ENCODE measurements at regions of chr1 and their contacts with region 1.

Region 1: DNA sequence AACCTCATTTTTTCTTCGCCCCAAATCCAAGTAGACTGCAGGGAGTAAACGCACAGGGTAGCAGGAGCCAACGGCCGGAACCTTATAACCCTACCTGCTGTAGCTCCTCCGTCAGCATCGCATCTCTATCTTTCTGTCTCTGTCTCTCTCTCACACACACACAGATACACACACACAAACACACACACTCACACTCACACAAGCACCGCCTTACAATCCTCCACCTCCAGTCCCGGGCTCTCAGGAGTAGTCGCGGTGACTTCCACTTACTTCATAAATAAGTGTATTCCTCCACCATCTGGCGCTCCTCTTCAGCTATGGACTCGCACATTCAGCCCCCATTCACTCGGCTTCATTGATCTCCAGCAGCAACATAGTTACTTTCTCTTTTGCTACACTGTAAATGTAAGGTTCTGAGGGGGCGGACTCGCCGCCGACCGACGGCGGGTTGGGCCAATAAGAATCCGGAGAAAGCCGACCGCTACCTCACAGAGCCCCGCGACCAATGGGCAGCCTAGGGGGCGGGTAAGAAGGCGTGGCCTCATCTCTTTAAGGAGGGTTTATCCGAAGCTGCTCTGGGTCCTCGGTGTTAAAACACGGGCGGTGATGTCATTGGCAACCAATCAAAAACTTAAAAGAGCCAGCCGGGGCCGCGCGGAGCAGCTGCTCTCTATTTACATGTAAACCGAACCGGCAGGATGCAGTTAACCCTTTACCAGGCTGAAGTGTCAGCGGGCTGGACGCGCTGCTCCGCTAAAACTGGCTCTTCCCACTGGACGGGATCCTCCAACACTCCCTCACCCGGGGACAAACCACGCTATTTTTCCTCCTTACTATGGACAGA is at the start of gene DUSP10:
- DNase-seq: peak; percentile 100
- ATAC-seq: peak; percentile 82
- H3K4me3 ChIP-seq: peak within 1 kb of the TSS; percentile 89
- H3K27ac ChIP-seq: peak within 1 kb of the TSS; percentile 85
- H3K4me1 ChIP-seq: peaks cover 15% of the 10 kb centered on the region
- H3K27me3 ChIP-seq: no peaks in the 10 kb centered on the region
- CTCF ChIP-seq: no peak
- total RNA-seq, gene DUSP10: 5.1 and 6.2 TPM in 2 replicates

Region 2: GRCh38 chr1:221543529-221544120 is 198.3 kb before region 1 on chr1:
- CTCF ChIA-PET with region 1: interaction called, 11 read pairs
- POLR2A ChIA-PET with region 1: no interaction called
- intact Hi-C with region 1: loop called (anchors 1 kb)
- DNase-seq: peak; percentile 60
- ATAC-seq: peak; percentile 48; the same call in 1 of the 2 replicates
- H3K4me3 ChIP-seq: no peak overlapping the region
- H3K27ac ChIP-seq: no peak overlapping the region
- H3K4me1 ChIP-seq: peaks cover 5% of the 10 kb centered on the region; the same call in 1 of the 2 replicates
- H3K27me3 ChIP-seq: no peaks in the 10 kb centered on the region
- CTCF ChIP-seq: peak; percentile 87

Region 3: DNA sequence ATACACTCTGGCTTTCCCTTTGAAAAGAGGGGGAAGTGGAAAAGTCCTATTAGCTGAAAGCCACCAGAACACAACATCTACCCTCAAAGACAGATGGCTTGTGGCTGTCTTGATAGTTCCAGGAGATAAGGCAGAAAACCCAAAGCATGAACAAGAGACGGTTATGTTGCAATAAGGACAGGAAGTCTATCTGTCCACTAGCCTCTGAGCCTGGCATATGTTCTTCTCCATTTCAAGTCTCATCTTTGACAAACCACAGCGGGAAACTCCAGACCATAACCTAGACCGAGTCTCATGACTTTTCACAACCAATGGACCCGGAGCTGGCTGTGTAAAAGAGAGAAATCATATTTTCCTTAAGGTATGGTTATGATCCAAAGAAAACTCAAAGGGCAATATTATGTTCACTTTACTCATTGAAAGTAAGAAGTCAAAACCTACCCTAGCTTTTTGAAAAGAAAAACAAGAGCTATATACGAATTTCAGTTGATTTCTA is 33.8 kb before region 1 on chr1:
- CTCF ChIA-PET with region 1: no interaction called
- POLR2A ChIA-PET with region 1: no interaction called
- intact Hi-C with region 1: no loop called
- DNase-seq: no peak
- ATAC-seq: no peak
- H3K4me3 ChIP-seq: no peak overlapping the region
- H3K27ac ChIP-seq: no peak overlapping the region
- H3K4me1 ChIP-seq: peaks cover 15% of the 10 kb centered on the region
- H3K27me3 ChIP-seq: no peaks in the 10 kb centered on the region
- CTCF ChIP-seq: no peak

Region 4: GRCh38 chr1:221718381-221719277 is 23.3 kb before region 1 on chr1:
- CTCF ChIA-PET with region 1: no interaction called
- POLR2A ChIA-PET with region 1: no interaction called
- intact Hi-C with region 1: loop called (anchors 2 kb)
- DNase-seq: peak; percentile 81
- ATAC-seq: peak; percentile 79
- H3K4me3 ChIP-seq: peak overlapping the region; percentile 14; the same call in 1 of the 2 replicates
- H3K27ac ChIP-seq: peak overlapping the region; percentile 38
- H3K4me1 ChIP-seq: peaks cover 32% of the 10 kb centered on the region
- H3K27me3 ChIP-seq: no peaks in the 10 kb centered on the region
- CTCF ChIP-seq: no peak

Region 5: DNA sequence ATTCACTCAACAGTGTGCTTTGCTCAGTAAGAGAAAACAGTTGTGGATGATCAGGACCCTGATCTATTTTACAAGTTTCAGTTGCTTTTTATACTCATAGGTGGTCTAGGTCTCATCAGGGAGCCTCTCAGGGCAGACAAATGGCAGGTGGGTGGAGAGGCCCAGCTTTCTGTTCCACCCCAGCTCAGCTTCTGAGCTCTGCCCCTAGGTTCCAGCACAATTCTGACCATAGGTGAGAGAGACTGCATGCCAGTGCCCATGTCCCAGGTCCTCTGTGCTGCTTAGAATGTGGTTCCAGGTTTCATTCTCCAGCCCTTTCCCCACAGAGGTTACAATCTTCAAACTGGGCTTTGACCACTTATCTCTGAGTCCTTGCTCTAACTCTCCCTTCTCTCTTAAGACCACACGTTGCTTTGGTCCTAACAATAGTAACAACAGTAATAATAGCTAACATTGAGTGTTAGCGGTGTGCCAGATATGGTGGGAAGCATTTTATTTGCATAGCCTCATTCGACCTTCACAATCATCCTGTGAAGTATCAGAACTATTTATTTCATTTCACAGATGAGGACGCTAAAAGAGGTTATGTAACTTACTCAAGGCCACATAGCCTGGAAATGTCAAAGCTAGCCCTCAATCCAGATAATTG is 19.5 kb after region 1 on chr1:
- CTCF ChIA-PET with region 1: no interaction called
- POLR2A ChIA-PET with region 1: no interaction called
- intact Hi-C with region 1: no loop called
- DNase-seq: no peak
- ATAC-seq: no peak
- H3K4me3 ChIP-seq: no peak overlapping the region
- H3K27ac ChIP-seq: no peak overlapping the region
- H3K4me1 ChIP-seq: no peaks in the 10 kb centered on the region
- H3K27me3 ChIP-seq: no peaks in the 10 kb centered on the region
- CTCF ChIP-seq: no peak

Region 6: GRCh38 chr1:221886743-221887413 is 144.9 kb after region 1 on chr1:
- CTCF ChIA-PET with region 1: interaction called, 9 read pairs
- POLR2A ChIA-PET with region 1: no interaction called
- intact Hi-C with region 1: loop called (anchors 1 kb)
- DNase-seq: peak; percentile 100
- ATAC-seq: peak; percentile 96
- H3K4me3 ChIP-seq: peak overlapping the region; percentile 38
- H3K27ac ChIP-seq: peak overlapping the region; percentile 72
- H3K4me1 ChIP-seq: peaks cover 33% of the 10 kb centered on the region
- H3K27me3 ChIP-seq: no peaks in the 10 kb centered on the region
- CTCF ChIP-seq: peak; percentile 49

Region 7: DNA sequence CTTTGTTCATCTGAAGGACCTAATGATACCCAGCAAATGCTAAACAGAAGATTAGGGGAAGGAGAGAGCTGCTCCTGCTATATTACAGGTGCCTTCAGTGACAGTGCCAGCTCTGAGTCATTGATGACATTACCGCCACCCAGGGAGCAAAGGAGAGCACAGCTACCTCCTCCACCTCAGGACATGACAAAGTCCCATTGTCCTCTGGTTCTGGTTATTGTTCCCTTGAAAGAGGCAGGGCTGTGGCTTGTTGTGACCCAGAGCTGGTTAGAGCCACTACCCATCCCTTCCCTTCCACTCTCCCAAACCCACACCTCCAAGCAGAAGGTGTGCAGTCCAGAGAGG is 363.4 kb after region 1 on chr1:
- CTCF ChIA-PET with region 1: no interaction called
- POLR2A ChIA-PET with region 1: no interaction called
- intact Hi-C with region 1: loop called (anchors 5 kb)
- DNase-seq: peak; percentile 86
- ATAC-seq: peak; percentile 92
- H3K4me3 ChIP-seq: no peak overlapping the region
- H3K27ac ChIP-seq: no peak overlapping the region
- H3K4me1 ChIP-seq: peaks cover 16% of the 10 kb centered on the region
- H3K27me3 ChIP-seq: 0 out of 2 replicates have a peak, but pooled peaks cover 6% of the 10 kb centered on the region
- CTCF ChIP-seq: peak; percentile 31; the same call in 1 of the 2 replicates